ENCODE measurements at regions of chr9 and their contacts with region 1.

Region 1: GRCh38 chr9:99184475-99185347 is 37.0 kb downstream of the ALG2 start:
- DNase-seq: peak; percentile 62 to 78 (median 67)
- H3K4me3 ChIP-seq: no peak overlapping the region
- H3K4me3 Mint-ChIP-seq: peak overlapping the region in 2 of 8 donors; percentile 12 to 41
- H3K27ac ChIP-seq: no peak overlapping the region
- H3K27ac Mint-ChIP-seq: peak overlapping the region in 3 of 7 donors; percentile 54 to 76 (median 55)
- H3K4me1 ChIP-seq: peaks cover 6% of the 10 kb centered on the region
- H3K4me1 Mint-ChIP-seq: peaks cover 5 to 7% (median 6%) of the 10 kb centered on the region in 4 donors
- H3K27me3 ChIP-seq: no peaks in the 10 kb centered on the region
- H3K27me3 Mint-ChIP-seq: peaks cover 2 to 4% of the 10 kb centered on the region in 2 donors

Region 2: GRCh38 chr9:98974994-98975712 is 209.6 kb before region 1 on chr9:
- CTCF ChIA-PET with region 1: interaction called, 12 read pairs
- POLR2A ChIA-PET with region 1: no interaction called
- intact Hi-C with region 1: no loop called
- DNase-seq: peak; percentile 61 to 74 (median 71)
- H3K4me3 ChIP-seq: peak overlapping the region in 1 of 2 donors; percentile 49
- H3K4me3 Mint-ChIP-seq: peak overlapping the region in 7 of 8 donors; percentile 30 to 62 (median 53)
- H3K27ac ChIP-seq: no peak overlapping the region
- H3K27ac Mint-ChIP-seq: no peak overlapping the region
- H3K4me1 ChIP-seq: peaks cover 10% of the 10 kb centered on the region
- H3K4me1 Mint-ChIP-seq: no peaks in the 10 kb centered on the region
- H3K27me3 ChIP-seq: no peaks in the 10 kb centered on the region
- H3K27me3 Mint-ChIP-seq: peaks cover 5% of the 10 kb centered on the region in 2 donors

Region 3: GRCh38 chr9:99085949-99086948 is 98.5 kb before region 1 on chr9:
- CTCF ChIA-PET with region 1: no interaction called
- POLR2A ChIA-PET with region 1: no interaction called
- intact Hi-C with region 1: no loop called
- DNase-seq: no peak
- H3K4me3 ChIP-seq: no peak overlapping the region
- H3K4me3 Mint-ChIP-seq: peak overlapping the region in 3 of 8 donors; percentile 20 to 33 (median 26)
- H3K27ac ChIP-seq: no peak overlapping the region
- H3K27ac Mint-ChIP-seq: peak overlapping the region in 1 of 7 donors; percentile 3
- H3K4me1 ChIP-seq: peaks cover 21% of the 10 kb centered on the region
- H3K4me1 Mint-ChIP-seq: peaks cover 15 to 22% (median 18%) of the 10 kb centered on the region in 4 donors
- H3K27me3 ChIP-seq: no peaks in the 10 kb centered on the region
- H3K27me3 Mint-ChIP-seq: no peaks in the 10 kb centered on the region

Region 4: DNA sequence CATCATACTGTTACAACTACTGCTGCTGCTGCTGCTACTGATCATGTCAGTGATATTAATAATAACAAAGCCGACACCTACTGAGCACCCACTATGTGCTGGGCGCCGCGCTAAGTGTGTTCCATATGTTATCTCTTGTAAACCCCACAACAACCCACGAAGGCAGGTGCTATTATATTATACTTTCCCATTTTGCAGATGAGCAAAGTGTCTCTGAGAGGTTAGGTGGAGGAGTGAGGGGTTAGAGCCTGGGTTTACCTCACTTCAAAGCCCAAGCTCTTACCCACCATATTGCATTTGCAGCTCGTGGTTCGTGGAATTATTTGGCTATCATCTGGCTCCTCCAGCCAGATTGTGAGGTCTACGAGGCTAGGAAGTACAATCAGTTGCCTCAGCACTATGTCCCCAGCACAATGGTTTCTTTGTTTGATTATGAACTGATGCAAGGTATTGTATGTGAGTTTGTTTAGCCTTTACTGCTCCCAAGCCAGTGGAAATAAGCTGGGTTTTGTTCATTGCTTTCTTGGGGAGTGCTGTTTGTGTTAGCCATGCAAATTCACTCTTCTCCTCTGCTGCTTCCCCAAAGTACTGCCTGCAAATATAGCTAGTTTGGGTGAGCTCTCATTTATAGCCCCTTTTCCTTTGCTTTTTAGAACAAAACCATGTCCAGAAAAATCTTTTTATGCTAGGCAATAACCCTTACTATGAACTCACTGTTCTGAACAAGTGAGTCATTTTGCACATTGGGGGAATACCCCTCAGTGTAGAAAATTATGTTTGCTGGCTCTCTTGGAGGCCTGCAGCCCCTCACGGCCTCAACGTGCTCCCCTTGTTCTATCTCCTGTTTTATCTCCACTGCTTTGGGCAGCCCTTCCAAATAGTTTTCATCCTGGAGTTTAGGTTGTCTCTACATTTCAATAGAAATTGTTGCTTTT is 10.9 kb before region 1 on chr9:
- CTCF ChIA-PET with region 1: interaction called, 40 read pairs
- POLR2A ChIA-PET with region 1: no interaction called
- intact Hi-C with region 1: no loop called
- DNase-seq: no peak
- H3K4me3 ChIP-seq: no peak overlapping the region
- H3K4me3 Mint-ChIP-seq: no peak overlapping the region
- H3K27ac ChIP-seq: no peak overlapping the region
- H3K27ac Mint-ChIP-seq: no peak overlapping the region
- H3K4me1 ChIP-seq: no peaks in the 10 kb centered on the region
- H3K4me1 Mint-ChIP-seq: no peaks in the 10 kb centered on the region
- H3K27me3 ChIP-seq: no peaks in the 10 kb centered on the region
- H3K27me3 Mint-ChIP-seq: peaks cover 5 to 6% of the 10 kb centered on the region in 2 donors

Region 5: GRCh38 chr9:99221621-99222415 is 37.1 kb after region 1 on chr9 and contains the starts of genes ALG2 and SEC61B:
- CTCF ChIA-PET with region 1: interaction called, 11 read pairs
- POLR2A ChIA-PET with region 1: no interaction called
- intact Hi-C with region 1: loop called (anchors 2 kb)
- DNase-seq: peak; percentile 92 to 95 (median 93)
- H3K4me3 ChIP-seq: peak within 1 kb of the TSS; percentile 57 to 78
- H3K4me3 Mint-ChIP-seq: peak within 1 kb of the TSS; percentile 95 to 100 (median 98)
- H3K27ac ChIP-seq: peak within 1 kb of the TSS; percentile 82
- H3K27ac Mint-ChIP-seq: peak within 1 kb of the TSS; percentile 99 to 100 (median 100)
- H3K4me1 ChIP-seq: peaks cover 54% of the 10 kb centered on the region
- H3K4me1 Mint-ChIP-seq: peaks cover 51 to 93% (median 74%) of the 10 kb centered on the region in 4 donors
- H3K27me3 ChIP-seq: no peaks in the 10 kb centered on the region
- H3K27me3 Mint-ChIP-seq: no peaks in the 10 kb centered on the region
- total RNA-seq, gene ALG2: 39.1 to 39.8 TPM
- total RNA-seq, gene SEC61B: 101 to 106 TPM

Region 6: DNA sequence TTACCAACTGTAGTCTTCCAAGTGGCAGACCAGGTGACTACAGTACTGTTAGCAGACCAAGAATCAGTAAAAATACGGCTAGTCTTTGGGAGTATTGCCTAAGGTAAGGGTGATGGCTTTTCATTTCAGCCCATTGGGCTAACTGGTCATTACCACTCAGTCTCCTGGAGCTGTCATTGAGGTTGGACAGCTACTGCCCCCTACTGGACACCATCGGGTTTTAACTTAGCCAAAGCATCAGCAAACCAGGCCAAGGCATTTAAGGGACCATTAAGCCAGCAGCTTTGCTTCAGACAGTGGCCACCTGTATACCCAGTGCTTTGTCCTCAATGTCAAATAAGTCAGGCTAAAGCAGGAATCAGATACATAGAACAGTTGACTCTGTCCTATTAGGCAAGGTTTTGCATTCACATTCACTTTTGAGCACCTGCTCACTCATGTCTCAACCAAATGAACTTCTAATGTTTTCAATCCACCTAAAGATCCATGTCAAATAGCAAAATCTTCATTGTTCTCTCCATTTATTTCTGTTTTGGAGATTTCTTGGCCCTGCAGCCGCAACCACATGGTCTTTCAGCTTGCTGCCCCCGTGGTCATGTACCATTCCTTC is 1031.6 kb after region 1 on chr9:
- CTCF ChIA-PET with region 1: interaction called, 12 read pairs
- POLR2A ChIA-PET with region 1: no interaction called
- intact Hi-C with region 1: no loop called
- DNase-seq: peak; percentile 39 to 51 (median 43)
- H3K4me3 ChIP-seq: no peak overlapping the region
- H3K4me3 Mint-ChIP-seq: no peak overlapping the region
- H3K27ac ChIP-seq: no peak overlapping the region
- H3K27ac Mint-ChIP-seq: no peak overlapping the region
- H3K4me1 ChIP-seq: no peaks in the 10 kb centered on the region
- H3K4me1 Mint-ChIP-seq: no peaks in the 10 kb centered on the region
- H3K27me3 ChIP-seq: no peaks in the 10 kb centered on the region
- H3K27me3 Mint-ChIP-seq: no peaks in the 10 kb centered on the region